Mammary epithelial cell (primary cell): ENCODE measurements at regions of chr15 and their contacts with region 1.

Region 1: DNA sequence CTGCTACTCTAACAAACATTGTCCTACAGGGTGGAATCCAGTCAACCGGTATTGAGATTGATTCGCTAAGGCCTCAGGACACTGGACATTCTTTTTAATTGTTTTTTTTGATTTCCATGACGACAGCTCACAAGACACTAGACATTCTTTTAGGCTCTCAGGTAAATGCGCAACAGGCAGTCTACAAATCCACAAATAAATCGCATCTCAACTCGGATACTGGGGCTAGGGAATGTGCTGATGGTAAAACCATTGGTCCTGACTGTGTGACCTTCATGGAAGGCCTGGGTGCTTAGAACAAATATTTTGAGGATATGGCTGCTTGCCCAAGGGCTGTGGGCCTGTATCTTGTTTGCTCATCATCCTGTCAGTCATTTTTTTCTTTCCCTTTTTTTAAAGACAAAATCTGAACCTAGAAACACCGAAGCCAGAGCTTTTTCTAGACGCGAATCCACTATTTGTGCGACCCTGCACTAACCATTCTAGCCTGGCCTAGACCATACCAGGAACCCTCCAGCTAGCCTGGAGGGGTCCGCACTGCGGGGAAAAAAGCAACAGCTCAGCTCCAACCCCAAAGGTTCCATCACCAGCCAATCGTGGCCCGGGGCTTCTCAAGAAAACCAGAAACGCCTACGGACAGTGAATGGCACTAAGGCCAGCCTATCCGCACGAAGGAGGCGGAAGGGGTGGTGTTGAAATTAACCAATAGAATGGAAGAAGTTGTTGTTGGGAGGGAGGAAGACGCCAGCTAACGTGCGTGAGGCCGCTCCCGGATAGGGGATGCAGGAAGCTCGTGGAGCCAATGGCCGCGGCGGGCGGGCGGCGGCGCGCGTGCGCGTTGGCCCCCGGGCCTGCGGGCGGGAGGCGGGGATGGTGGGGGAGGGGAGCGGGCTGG is 18.1 kb upstream of the CHD2 start:
- DNase-seq: peak; percentile 100
- H3K4me3 ChIP-seq: peak overlapping the region; percentile 44 to 51 (median 48)
- H3K27ac ChIP-seq: peak overlapping the region; percentile 95
- H3K4me1 ChIP-seq: peaks cover 15% of the 10 kb centered on the region
- H3K27me3 ChIP-seq: no peaks in the 10 kb centered on the region
- CTCF ChIP-seq: no peak

Region 2: DNA sequence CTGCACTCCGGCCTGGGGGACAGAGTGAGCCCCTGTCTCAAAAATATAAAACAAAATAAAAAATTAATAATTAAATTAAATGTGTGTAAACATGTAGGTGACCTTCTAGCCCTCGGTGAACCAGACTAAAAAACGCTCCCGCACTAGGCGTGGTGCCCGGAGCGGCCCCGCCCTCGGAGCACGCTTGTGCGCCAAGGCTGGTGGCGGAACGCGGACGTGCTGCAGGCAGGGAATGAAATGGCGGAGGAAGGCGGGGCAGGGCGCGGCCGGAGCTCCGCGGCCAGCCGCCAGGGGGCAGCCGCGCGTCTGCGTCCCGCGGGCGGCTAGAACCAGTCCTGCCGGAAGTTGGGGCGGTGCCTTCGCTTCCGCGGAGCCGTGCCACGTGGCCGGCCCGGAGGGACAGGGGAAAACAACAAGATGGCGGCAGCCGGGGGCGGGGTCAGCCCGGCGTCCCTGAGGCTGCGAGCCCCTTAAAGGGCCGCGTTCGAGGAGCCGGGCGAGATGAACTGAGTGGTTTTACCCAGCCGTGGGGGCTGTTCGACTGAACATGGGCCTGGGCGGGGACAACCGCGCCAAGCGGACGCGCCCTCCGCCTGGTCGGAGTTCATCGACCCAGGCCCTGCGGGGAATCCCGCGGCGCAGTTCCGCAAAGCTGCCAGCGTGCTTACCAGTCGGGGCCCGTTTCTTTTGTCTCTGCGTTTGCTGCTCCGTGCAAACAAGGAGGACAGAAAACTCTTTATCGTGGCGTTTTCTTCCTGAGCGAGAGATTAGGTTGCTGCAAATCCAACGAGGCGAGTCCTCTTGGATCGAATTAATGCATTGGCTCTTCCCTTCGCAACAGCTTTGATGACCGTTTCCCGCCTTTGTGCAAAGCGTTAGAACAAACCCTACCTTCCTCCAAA is 72.8 kb before region 1 on chr15:
- CTCF ChIA-PET with region 1: no interaction called
- dilution Hi-C with region 1: no loop called
- in situ Hi-C with region 1: loop called (anchors 5 kb)
- intact Hi-C with region 1: loop called (anchors 1 kb)
- DNase-seq: peak; percentile 96
- H3K4me3 ChIP-seq: peak overlapping the region; percentile 41 to 66 (median 60)
- H3K27ac ChIP-seq: peak overlapping the region; percentile 98
- H3K4me1 ChIP-seq: peaks cover 37% of the 10 kb centered on the region
- H3K27me3 ChIP-seq: no peaks in the 10 kb centered on the region
- CTCF ChIP-seq: peak; percentile 74 to 76

Region 3: GRCh38 chr15:92820236-92821021 is 61.6 kb before region 1 on chr15:
- CTCF ChIA-PET with region 1: interaction called, 4 read pairs
- dilution Hi-C with region 1: no loop called
- in situ Hi-C with region 1: no loop called
- intact Hi-C with region 1: loop called (anchors 1 kb)
- DNase-seq: peak; percentile 92
- H3K4me3 ChIP-seq: peak overlapping the region; percentile 37 to 47 (median 46)
- H3K27ac ChIP-seq: peak overlapping the region; percentile 96
- H3K4me1 ChIP-seq: peaks cover 46% of the 10 kb centered on the region
- H3K27me3 ChIP-seq: no peaks in the 10 kb centered on the region
- CTCF ChIP-seq: no peak

Region 4: DNA sequence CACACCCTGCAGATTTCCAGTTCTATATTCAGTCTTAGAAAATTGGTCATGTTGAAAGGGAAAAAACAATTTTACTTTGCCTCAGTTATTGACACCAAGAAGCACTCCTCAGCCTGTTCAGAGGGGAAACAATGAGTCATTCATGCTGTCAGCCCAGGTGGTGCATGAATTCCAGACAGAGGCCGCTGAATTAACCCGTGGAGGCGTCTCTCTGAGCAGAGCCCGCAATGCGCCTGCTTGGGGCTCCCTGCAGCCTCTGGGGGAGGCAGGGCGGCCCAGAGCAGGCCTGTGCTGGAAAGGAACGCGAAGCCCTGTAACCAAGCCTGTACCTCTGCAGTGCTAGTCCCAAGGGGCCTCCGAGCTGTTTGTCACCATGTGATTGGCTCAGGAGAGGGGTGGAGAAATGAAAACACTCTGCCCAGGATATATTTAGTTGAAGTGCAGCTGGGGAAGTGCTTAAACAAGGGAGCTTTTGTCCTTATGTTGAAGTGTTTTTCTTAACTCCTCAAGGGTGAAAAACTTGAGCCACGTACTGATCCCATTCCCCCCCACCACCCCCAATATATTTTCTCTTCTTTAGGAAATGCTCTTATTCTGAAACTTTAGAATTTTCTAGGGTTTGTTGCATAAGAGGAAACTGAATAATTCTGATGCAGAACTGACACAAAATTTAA is 50.3 kb before region 1 on chr15:
- CTCF ChIA-PET with region 1: interaction called, 3 read pairs
- dilution Hi-C with region 1: no loop called
- in situ Hi-C with region 1: no loop called
- intact Hi-C with region 1: loop called (anchors 1 kb)
- DNase-seq: peak; percentile 99
- H3K4me3 ChIP-seq: peak overlapping the region in 2 of 3 experiments; percentile 18 to 40
- H3K27ac ChIP-seq: peak overlapping the region; percentile 87
- H3K4me1 ChIP-seq: peaks cover 21% of the 10 kb centered on the region
- H3K27me3 ChIP-seq: no peaks in the 10 kb centered on the region
- CTCF ChIP-seq: no peak

Region 5: GRCh38 chr15:92848852-92849598 is 33.0 kb before region 1 on chr15:
- CTCF ChIA-PET with region 1: no interaction called
- dilution Hi-C with region 1: no loop called
- in situ Hi-C with region 1: no loop called
- intact Hi-C with region 1: no loop called
- DNase-seq: no peak
- H3K4me3 ChIP-seq: no peak overlapping the region
- H3K27ac ChIP-seq: no peak overlapping the region
- H3K4me1 ChIP-seq: peaks cover 5% of the 10 kb centered on the region
- H3K27me3 ChIP-seq: no peaks in the 10 kb centered on the region
- CTCF ChIP-seq: no peak

Region 6: GRCh38 chr15:92917606-92918407 is 35.8 kb after region 1 on chr15:
- CTCF ChIA-PET with region 1: no interaction called
- dilution Hi-C with region 1: no loop called
- in situ Hi-C with region 1: no loop called
- intact Hi-C with region 1: loop called (anchors 1 kb)
- DNase-seq: peak; percentile 86
- H3K4me3 ChIP-seq: peak overlapping the region in 1 of 3 experiments; percentile 8
- H3K27ac ChIP-seq: peak overlapping the region; percentile 83
- H3K4me1 ChIP-seq: peaks cover 61% of the 10 kb centered on the region
- H3K27me3 ChIP-seq: no peaks in the 10 kb centered on the region
- CTCF ChIP-seq: peak; percentile 75 to 87